ENCODE measurements at regions of chr1 and their contacts with region 1.

Region 1: DNA sequence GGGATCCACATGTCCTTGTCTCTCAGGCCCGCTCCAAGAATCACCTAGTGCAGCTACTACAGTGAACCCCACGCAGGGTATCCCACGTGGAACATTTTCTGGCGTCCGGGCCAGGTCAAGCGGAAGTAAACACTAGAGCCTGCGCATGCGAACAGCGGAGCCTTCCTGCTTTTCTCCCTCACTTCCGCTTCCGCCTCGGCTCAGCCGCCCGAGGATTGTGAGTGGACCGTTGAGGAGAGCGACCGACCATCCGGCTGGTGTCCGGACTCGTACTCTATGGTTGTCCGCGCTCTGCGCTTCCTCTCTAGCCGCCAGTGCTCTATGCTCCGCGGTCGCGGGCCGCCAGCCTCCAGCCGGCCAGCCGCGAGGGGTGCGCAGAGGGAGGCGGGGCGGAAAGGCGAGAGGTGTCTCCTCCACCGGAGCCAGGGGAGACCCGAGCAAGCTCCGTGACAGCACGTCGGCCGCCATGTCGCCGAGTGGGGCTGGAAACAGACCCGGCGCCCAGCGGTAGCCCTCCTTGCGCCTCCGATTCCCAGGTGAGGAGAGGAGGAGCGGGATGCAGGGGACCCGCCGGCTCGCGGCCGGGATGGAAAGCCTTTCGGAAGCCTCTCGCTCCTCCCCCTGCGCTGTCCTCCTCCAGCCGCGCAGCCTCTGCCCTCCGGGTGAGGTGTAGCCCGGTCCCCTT is at the starts of genes CNST and TFB2M:
- DNase-seq: peak; percentile 99
- total RNA-seq, gene CNST: 10.9 TPM
- total RNA-seq, gene TFB2M: 9.6 TPM

Region 2: DNA sequence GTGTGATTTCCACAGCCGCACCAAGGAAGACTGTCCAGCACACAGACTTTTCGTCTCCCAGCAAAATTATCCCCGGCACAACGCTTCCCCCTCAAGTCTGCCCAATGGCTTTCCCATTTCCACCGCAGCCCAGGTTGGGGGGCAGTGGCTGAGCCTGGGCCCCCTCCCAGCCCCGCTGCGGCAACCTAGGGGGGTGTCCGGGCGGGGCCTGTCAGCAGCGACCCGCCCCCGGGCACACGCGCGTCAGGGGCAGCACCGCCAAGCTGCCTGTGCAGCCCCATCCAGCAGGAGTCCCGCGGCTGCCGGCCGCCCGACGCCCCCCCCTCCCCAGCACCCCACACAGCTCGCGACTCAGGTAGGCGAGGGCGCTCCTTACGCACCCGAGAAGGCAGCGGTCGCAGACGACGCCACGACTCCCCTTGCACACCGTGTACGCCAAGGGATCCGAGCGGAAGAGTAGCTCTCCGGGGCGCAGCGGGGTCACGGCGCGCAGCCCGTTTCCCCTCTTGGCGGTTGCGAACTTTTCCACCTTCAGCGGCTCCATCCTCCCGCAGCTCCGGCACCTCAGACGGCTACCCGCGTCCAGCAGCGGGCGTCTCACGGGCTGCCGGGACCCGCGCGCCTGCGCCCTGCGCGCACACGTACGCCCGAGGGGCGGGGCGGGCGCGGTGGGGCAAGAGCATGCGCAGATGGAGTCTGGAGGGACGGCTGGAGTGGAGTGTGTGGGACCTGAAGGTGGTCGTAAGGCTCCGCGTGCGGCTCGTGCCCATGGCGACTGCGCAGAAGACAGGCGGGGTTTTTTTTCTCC is 59.4 kb before region 1 on chr1 and contains the start of gene SMYD3:
- intact Hi-C with region 1: loop called (anchors 5 kb)
- DNase-seq: peak; percentile 89
- total RNA-seq, gene SMYD3: 5.6 TPM

Region 3: DNA sequence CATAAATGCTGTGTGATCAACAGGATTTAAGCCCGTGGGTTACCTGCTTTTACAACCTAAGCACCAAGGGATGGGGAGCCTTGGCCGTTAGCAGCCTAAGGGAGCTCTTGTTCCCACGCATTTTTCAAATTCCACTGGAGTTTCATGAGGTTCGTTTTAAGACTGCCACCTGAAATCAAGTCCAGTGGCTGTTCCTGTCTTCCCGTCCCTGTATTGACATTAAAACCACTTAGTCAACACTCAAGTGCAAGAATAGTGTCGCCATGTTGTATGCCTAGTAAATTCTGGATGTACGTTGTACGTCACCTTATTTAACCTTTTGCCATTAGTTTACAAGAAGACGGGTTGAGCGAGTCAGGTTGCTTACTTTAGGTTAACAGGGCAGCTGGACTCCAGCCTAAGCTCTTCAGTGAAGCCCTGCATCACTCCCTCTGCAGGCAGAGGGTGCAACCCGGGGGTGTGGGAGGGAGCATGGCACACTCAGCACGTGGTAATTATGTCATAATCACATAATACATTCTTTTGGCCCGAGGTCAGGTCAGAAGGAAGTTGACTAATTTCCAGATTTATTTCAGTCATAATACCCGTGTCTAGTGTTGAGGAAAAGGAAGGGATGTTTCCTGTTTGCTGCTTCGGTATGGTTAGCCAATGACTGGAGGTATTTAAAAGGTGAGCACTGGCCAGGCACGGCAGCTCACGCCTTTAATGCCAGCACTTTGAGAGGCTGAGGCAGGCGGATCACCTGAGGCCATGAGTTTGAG is 42.5 kb after region 1 on chr1:
- intact Hi-C with region 1: loop called (anchors 2 kb)
- DNase-seq: peak; percentile 83

Region 4: DNA sequence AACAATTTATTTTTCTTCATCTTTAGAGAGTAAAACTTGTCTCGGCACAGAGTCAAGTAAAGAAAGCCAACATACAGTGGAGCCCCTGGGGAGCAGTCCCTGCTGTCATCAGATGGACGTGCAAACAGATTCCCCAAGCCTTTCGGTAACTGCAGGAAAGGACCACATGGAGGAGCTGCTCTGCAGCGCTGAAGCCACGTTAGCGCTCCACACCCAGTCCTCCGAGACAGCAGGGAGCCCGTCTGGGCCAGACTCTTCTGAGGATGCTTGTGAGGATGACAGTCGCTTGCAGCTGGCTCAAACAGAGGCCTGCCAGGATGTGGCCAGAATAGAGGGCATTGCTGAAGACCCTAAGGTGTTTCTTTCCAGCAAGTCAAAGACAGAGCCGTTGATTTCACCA is 80.8 kb after region 1 on chr1:
- intact Hi-C with region 1: loop called (anchors 5 kb)
- DNase-seq: peak; percentile 82

Region 5: GRCh38 chr1:246699095-246699735 is 132.9 kb after region 1 on chr1:
- intact Hi-C with region 1: loop called (anchors 5 kb)
- DNase-seq: peak; percentile 89

Region 6: GRCh38 chr1:246724016-246724730 is 157.9 kb after region 1 on chr1 and contains the start of gene SCCPDH:
- intact Hi-C with region 1: loop called (anchors 10 kb)
- DNase-seq: peak; percentile 87
- total RNA-seq, gene SCCPDH: 31.3 TPM

Region 7: DNA sequence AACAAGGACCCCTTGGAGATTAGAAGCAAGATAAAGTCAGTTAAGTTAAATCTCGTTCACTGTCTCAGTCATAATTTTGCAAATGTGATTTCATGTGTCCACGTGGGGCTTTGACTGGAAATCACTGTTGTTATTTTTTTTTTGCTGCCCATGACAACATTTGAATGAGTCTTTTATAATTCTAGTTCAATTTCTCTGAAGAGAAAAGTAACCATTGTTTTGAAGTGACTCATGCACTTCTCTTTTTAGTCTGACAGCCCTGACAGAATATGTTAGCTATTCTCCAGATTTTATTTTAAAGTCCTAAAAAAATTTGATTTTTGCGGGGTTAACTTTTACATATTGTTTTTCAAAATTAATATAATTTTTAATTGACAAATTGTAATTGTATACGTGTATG is 819.0 kb after region 1 on chr1:
- intact Hi-C with region 1: no loop called
- DNase-seq: no peak

Measured in cardiac septum (tissue), 1 donor.